ENCODE measurements at regions of chr18 and their contacts with region 1.

Region 1: DNA sequence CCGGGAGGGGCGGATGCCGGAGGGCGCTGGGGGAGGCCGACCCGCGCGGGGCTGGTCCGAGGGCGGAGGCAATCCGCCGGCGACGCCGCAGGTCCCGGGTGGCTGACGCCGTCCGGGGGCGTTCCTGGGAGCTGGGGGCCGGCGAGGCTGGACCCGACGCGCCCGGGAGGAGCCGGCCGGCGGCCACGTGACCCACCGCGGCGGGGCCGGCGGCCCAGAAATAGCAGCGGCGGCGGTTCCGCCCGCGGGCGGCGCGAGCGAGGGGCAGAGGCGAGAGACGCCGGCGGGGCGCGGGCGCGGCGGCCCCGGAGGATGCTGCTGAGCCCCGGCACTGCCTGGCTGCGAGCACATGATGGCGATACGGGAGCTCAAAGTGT is at the start of gene RAB31:
- DNase-seq: peak; percentile 35
- H3K4me3 ChIP-seq: peak within 1 kb of the TSS; percentile 53 to 67
- H3K27ac ChIP-seq: peak within 1 kb of the TSS; percentile 74 to 83
- H3K4me1 ChIP-seq: no peaks in the 10 kb centered on the region
- H3K27me3 ChIP-seq: no peaks in the 10 kb centered on the region
- CTCF ChIP-seq: peak in 1 of 4 experiments; percentile 4
- POLR2A ChIP-seq: no peak
- total RNA-seq, gene RAB31: 7.7 to 86.9 TPM

Region 2: GRCh38 chr18:9549405-9549804 is 158.6 kb before region 1 on chr18:
- intact Hi-C with region 1: no loop called
- DNase-seq: no peak
- H3K4me3 ChIP-seq: no peak overlapping the region
- H3K27ac ChIP-seq: no peak overlapping the region
- H3K4me1 ChIP-seq: no peaks in the 10 kb centered on the region
- H3K27me3 ChIP-seq: no peaks in the 10 kb centered on the region
- CTCF ChIP-seq: peak in 1 of 4 experiments; percentile 11
- POLR2A ChIP-seq: no peak

Region 3: DNA sequence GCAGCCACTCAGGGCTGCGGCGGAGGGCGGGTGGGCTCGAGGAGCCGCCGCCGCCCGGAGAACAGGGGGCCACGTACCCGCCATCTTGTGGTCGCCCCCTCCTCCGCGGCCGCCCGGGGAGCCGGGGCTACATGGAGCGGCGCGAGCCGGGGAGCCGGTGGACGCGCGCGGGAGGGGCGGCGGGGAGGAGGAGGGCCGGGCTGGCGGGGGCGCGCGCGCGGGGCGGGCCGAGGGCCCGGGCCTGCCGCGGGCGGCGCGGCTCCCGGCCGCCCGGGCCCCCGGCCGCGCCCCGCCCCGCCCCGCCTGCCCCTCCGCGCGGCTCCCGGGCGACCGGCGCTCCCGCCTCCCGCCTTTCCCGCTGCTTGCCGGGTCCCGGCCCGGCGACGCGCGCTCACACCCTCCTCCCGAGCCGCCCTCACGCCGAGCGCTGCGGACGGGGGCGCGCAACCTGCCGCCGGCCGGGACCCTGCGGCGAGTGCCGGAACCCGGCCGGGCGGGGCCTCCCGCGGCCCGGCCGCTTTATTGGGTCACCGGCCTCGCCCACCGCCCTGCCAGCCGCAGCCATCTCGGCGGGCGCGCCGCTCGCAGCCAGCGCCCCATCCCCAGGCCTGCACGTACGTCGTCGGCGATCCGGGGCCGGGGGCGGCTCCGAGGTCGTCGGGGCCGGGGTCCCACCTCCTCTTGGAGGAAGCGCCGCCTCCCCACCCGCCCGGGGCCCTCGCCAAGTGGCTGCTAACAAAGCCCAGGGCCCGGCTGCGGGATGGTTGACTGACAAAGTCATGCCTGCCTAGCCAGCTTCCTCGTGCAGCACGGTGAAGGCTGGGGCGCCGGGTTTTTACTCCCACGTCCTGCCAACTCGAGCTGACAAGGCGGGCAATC is 93.4 kb before region 1 on chr18 and contains the start of gene PPP4R1:
- intact Hi-C with region 1: loop called (anchors 10 kb)
- DNase-seq: peak; percentile 73
- H3K4me3 ChIP-seq: peak within 1 kb of the TSS; percentile 84 to 92
- H3K27ac ChIP-seq: peak within 1 kb of the TSS; percentile 91 to 97
- H3K4me1 ChIP-seq: no peaks in the 10 kb centered on the region
- H3K27me3 ChIP-seq: no peaks in the 10 kb centered on the region
- CTCF ChIP-seq: no peak
- POLR2A ChIP-seq: peak; percentile 43
- total RNA-seq, gene PPP4R1: 39.1 to 67.0 TPM

Region 4: GRCh38 chr18:9849407-9850281 is 141.6 kb after region 1 on chr18:
- intact Hi-C with region 1: loop called (anchors 10 kb)
- DNase-seq: peak; percentile 21
- H3K4me3 ChIP-seq: no peak overlapping the region
- H3K27ac ChIP-seq: peak overlapping the region in 1 of 2 donors; percentile 2
- H3K4me1 ChIP-seq: peaks cover 8% of the 10 kb centered on the region
- H3K27me3 ChIP-seq: no peaks in the 10 kb centered on the region
- CTCF ChIP-seq: no peak
- POLR2A ChIP-seq: no peak

Region 5: DNA sequence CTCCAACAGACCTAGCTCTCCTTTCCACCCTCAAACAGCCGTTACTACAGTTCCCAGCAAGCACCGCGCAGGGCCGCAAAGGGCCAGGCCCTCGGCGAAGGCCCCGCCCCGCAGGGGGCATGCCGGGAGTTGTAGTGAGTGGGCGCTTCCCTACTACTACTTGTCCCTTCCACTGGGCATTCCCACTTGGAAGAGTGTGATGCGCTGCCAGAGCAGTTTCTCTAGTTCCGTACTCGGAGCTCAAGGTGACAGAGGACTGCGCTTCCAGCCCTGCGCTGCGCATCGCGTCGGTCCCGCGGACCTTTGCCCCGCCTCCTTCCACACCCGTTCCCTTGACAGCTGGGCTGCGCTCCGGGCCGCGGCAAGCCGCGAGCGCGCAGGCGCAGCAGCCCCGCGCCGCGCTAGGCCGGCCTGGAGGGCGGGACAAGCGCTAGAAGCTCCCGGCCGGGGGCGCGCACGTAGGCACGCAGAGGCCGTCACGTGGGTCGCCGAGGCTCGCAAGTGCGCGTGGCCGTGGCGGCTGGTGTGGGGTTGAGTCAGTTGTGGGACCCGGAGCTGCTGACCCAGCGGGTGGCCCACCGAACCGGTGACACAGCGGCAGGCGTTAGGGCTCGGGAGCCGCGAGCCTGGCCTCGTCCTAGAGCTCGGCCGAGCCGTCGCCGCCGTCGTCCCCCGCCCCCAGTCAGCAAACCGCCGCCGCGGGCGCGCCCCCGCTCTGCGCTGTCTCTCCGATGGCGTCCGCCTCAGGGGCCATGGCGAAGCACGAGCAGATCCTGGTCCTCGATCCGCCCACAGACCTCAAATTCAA is 205.7 kb after region 1 on chr18 and contains the start of gene VAPA:
- intact Hi-C with region 1: loop called (anchors 5 kb)
- DNase-seq: peak; percentile 94
- H3K4me3 ChIP-seq: peak within 1 kb of the TSS; percentile 88 to 96
- H3K27ac ChIP-seq: peak within 1 kb of the TSS; percentile 99 to 100
- H3K4me1 ChIP-seq: peaks cover 5% of the 10 kb centered on the region
- H3K27me3 ChIP-seq: no peaks in the 10 kb centered on the region
- CTCF ChIP-seq: peak in 1 of 4 experiments; percentile 26
- POLR2A ChIP-seq: peak; percentile 96
- total RNA-seq, gene VAPA: 140 to 183 TPM

Region 6: DNA sequence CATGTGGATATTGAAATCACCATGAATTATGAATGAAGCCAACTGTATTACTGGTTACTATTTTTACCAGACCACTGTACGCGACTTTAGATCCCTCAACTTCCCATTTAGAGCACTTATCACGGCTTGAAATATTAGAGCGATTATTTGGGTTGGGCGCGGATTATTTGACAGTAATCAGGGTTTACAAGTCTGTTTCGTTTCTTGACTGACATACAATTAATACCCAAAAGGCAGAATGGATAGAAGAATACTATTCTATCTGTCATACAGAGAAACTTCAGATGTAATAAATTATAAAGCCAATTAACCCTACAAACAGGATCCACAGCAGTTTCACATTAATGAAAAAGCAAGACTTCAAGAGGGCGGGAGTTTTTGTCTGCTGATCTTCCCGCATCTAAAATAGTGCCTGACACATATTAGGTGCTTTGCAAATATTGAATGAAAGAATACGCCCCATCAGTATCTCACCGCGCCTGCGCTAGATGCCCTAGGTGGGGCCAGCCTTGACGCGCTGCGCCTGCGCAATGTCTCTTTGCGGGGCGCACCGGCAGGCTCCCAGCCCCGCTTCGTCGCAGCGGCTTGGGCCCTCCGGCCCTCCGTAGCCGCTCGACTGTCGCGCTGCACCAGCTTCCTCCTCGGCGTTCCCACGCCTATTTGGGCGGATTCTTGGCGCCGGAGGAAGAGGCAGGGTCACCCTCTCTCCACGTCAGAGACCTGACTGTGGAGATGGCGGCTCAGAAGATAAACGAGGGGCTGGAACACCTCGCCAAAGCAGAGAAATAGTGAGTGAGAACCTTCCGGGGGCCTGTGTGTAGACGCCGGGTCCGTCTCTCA is 817.5 kb after region 1 on chr18 and contains the start of gene NAPG:
- intact Hi-C with region 1: loop called (anchors 10 kb)
- DNase-seq: peak; percentile 78
- H3K4me3 ChIP-seq: peak within 1 kb of the TSS; percentile 85 to 89
- H3K27ac ChIP-seq: peak within 1 kb of the TSS; percentile 85 to 92
- H3K4me1 ChIP-seq: no peaks in the 10 kb centered on the region
- H3K27me3 ChIP-seq: no peaks in the 10 kb centered on the region
- CTCF ChIP-seq: peak in 1 of 4 experiments; percentile 22
- POLR2A ChIP-seq: peak; percentile 38
- total RNA-seq, gene NAPG: 23.2 to 47.5 TPM